HEK293 (cell line): ENCODE measurements at regions of chr1 and their contacts with region 1.

Region 1: GRCh38 chr1:24830680-24831272 is 85.5 kb downstream of the CLIC4 start:
- H3K4me3 ChIP-seq: no peak overlapping the region
- H3K27ac ChIP-seq: no peak overlapping the region
- H3K4me1 ChIP-seq: peaks cover 21% of the 10 kb centered on the region
- CTCF ChIP-seq: no peak; the same call in 1 of the 2 replicates

Region 2: GRCh38 chr1:24673336-24673735 is 157.4 kb before region 1 on chr1:
- CTCF ChIA-PET with region 1: interaction called, 10 read pairs
- POLR2A ChIA-PET with region 1: interaction called, 4 read pairs
- H3K4me3 ChIP-seq: no peak overlapping the region
- H3K27ac ChIP-seq: no peak overlapping the region
- H3K4me1 ChIP-seq: no peaks in the 10 kb centered on the region
- CTCF ChIP-seq: no peak

Region 3: DNA sequence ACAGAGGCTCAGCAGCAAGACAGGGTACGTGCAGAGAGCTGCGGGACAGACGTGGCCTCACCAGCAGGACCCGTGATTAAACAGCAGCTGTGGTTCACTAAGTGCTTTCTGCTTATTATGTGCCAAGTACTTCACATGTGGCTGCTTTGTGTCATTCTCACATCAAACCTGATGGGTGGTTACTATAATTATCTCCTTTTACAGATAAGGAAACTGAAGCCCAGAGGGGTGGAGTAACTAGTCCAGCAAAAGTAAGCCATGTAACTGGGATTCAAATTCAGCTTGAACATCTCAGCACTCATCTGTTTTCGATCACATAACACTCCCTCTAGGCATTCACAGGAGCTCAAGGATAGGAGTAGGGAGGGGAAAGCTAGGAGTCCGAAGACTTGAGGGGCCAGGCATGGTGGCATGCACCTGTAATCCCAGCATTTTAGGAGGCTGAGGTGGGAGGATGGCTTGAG is 136.4 kb before region 1 on chr1:
- CTCF ChIA-PET with region 1: interaction called, 152 read pairs
- POLR2A ChIA-PET with region 1: interaction called, 8 read pairs
- H3K4me3 ChIP-seq: no peak overlapping the region
- H3K27ac ChIP-seq: no peak overlapping the region
- H3K4me1 ChIP-seq: 0 out of 2 replicates have a peak, but pooled peaks cover 3% of the 10 kb centered on the region
- CTCF ChIP-seq: no peak

Region 4: GRCh38 chr1:24724345-24725208 is 106.2 kb before region 1 on chr1:
- CTCF ChIA-PET with region 1: no interaction called
- POLR2A ChIA-PET with region 1: no interaction called
- H3K4me3 ChIP-seq: no peak overlapping the region
- H3K27ac ChIP-seq: peak overlapping the region; percentile 39; the same call in 1 of the 2 replicates
- H3K4me1 ChIP-seq: peaks cover 4% of the 10 kb centered on the region
- CTCF ChIP-seq: no peak

Region 5: GRCh38 chr1:25063591-25064416 is 233.0 kb after region 1 on chr1:
- CTCF ChIA-PET with region 1: no interaction called
- POLR2A ChIA-PET with region 1: no interaction called
- H3K4me3 ChIP-seq: no peak overlapping the region
- H3K27ac ChIP-seq: no peak overlapping the region
- H3K4me1 ChIP-seq: no peaks in the 10 kb centered on the region
- CTCF ChIP-seq: no peak